ENCODE measurements at regions of chr3 and their contacts with region 1.

Region 1: DNA sequence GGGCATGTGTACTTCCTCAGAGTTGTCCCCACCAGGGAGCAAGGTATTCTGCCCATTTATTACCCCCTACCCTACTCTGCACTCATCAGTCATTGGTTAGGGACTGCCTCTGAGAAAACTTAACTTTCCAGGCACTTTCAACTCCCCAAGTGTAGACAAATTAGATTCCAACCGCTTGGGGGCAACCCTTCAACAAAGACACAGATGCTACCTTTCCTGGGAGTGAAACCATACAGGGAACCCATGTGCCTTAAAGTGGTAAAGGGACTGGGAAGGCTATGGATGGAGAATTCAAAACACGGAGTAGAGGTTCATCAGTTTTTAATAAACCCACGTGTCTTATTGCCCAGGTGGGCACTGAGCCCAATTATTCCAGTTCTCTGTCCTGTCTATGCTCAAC is 19.4 kb upstream of the UBE2E2 start:
- DNase-seq: peak; percentile 62
- H3K4me3 ChIP-seq: no peak overlapping the region
- H3K27ac ChIP-seq: no peak overlapping the region
- H3K4me1 ChIP-seq: no peaks in the 10 kb centered on the region
- H3K27me3 ChIP-seq: no peaks in the 10 kb centered on the region
- CTCF ChIP-seq: peak; percentile 60 to 65

Region 2: GRCh38 chr3:23600167-23600871 is 416.6 kb after region 1 on chr3:
- CTCF ChIA-PET with region 1: no interaction called
- dilution Hi-C with region 1: no loop called
- in situ Hi-C with region 1: no loop called
- intact Hi-C with region 1: loop called (anchors 10 kb)
- DNase-seq: peak; percentile 42
- H3K4me3 ChIP-seq: no peak overlapping the region
- H3K27ac ChIP-seq: no peak overlapping the region
- H3K4me1 ChIP-seq: no peaks in the 10 kb centered on the region
- H3K27me3 ChIP-seq: no peaks in the 10 kb centered on the region
- CTCF ChIP-seq: no peak

Region 3: GRCh38 chr3:23761440-23761896 is 577.7 kb after region 1 on chr3:
- CTCF ChIA-PET with region 1: no interaction called
- dilution Hi-C with region 1: no loop called
- in situ Hi-C with region 1: loop called in 1 of 2 experiments (anchors 25 kb)
- intact Hi-C with region 1: loop called (anchors 1 kb)
- DNase-seq: peak; percentile 44
- H3K4me3 ChIP-seq: no peak overlapping the region
- H3K27ac ChIP-seq: no peak overlapping the region
- H3K4me1 ChIP-seq: no peaks in the 10 kb centered on the region
- H3K27me3 ChIP-seq: no peaks in the 10 kb centered on the region
- CTCF ChIP-seq: peak; percentile 45 to 78

Region 4: DNA sequence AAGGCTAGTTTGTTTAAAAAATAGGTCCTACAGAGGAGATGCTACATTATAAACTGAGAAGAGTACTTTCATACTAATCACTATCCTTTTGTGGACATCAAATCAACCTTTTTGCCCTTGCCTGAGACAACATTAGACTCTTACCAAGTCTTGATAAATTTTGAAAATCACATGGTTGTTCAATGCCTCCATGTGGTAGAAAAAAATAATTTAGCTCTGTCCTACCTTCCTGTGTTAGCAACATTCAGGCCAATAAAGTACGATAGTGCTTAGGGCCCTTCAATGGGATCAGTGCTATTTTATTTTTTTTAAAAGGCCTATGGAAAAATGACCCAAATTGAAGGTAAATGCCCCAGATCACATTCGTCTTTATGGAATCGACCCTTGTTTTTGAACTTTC is 617.0 kb after region 1 on chr3:
- CTCF ChIA-PET with region 1: no interaction called
- dilution Hi-C with region 1: no loop called
- in situ Hi-C with region 1: loop called in 1 of 2 experiments (anchors 25 kb)
- intact Hi-C with region 1: loop called (anchors 1 kb)
- DNase-seq: no peak
- H3K4me3 ChIP-seq: no peak overlapping the region
- H3K27ac ChIP-seq: no peak overlapping the region
- H3K4me1 ChIP-seq: no peaks in the 10 kb centered on the region
- H3K27me3 ChIP-seq: no peaks in the 10 kb centered on the region
- CTCF ChIP-seq: peak; percentile 2 to 23

Region 5: DNA sequence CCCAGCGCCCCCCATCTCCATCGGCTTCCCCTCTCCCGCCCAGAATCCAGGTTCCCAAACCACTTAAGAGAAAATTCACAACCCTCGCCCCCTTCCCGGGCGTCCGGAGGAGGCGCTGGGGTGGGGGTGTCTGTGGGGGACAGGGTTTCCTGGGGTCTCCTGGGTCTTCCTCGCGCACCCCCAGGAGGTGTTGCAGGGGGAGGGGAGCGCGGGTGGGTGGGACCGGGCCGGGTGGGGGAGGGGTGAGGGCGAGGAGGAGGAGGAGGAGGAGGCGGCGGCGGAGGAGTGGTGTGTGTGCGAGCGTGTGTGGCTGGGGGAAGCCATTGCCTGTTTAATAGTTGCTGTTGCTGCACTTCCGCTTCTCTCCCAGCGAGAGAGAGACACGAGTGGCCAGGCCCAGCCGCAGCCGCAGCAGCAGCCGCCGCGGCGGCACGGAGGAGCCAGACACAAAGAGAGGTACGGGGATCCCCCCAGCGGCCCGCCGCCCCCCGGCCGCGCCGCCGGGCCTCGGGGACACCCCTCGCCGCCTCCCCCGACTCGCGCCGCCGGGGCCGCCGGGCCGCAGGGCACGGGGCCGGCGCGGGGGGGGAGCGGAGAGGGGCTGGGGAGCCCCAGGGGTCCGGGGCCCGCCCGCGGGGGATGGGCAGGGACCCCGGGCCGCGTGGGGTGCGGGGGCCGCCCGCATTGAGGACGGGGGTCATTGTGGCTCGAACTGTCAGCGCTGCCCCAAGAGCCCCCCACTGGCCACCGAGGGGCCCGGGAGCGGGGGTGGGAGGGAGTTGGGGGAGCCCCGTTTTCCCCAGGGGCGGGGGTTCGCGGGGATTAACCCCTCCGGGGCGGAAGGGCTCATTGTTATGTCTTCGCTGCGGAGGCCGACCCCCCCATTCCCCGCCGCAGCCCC is 622.1 kb after region 1 on chr3 and contains the start of gene UBE2E1:
- CTCF ChIA-PET with region 1: no interaction called
- dilution Hi-C with region 1: no loop called
- in situ Hi-C with region 1: loop called in 1 of 2 experiments (anchors 25 kb)
- intact Hi-C with region 1: no loop called
- DNase-seq: peak; percentile 54
- H3K4me3 ChIP-seq: peak within 1 kb of the TSS; percentile 63 to 76 (median 75)
- H3K27ac ChIP-seq: peak within 1 kb of the TSS; percentile 38
- H3K4me1 ChIP-seq: peaks cover 8% of the 10 kb centered on the region
- H3K27me3 ChIP-seq: no peaks in the 10 kb centered on the region
- CTCF ChIP-seq: no peak
- total RNA-seq, gene UBE2E1: 49.5 to 92.7 TPM

Region 6: DNA sequence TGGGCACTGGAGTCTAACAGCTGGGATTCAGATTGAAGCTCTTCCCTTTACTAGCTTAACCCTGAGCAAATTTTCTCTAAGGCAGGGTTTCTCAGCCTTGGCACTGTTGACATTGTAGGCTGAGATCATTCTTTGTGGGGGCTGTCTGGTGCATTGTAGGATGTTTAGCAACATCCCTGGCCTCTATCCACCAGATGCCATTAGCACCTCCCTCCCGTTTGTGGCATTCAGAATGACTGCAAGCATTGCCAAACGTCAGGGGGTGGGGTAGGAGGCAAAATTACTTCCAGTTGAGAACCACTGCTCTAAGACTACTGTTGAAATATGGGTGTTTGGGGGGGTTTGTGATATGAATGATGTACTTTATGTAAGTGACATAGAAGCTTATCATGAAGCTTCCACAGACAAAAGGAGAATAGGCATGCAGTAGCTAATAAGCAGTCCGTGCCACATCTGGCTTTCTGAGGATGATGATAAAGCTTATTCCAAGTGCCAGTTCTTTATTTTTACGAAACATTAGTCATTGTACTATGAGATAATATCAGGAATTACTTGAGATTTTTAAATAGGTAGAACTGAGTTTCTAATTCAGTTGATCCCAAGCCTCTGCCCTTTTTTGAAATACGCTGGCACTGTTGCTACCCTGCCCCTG is 693.7 kb after region 1 on chr3:
- CTCF ChIA-PET with region 1: no interaction called
- dilution Hi-C with region 1: no loop called
- in situ Hi-C with region 1: no loop called
- intact Hi-C with region 1: loop called (anchors 10 kb)
- DNase-seq: peak; percentile 77
- H3K4me3 ChIP-seq: no peak overlapping the region
- H3K27ac ChIP-seq: no peak overlapping the region
- H3K4me1 ChIP-seq: peaks cover 26% of the 10 kb centered on the region
- H3K27me3 ChIP-seq: no peaks in the 10 kb centered on the region
- CTCF ChIP-seq: no peak

Measured in mammary epithelial cell (primary cell).